ENCODE measurements at regions of chr7 and their contacts with region 1.

Region 1: GRCh38 chr7:120402079-120402767 is 129.2 kb downstream of the KCND2 start:
- DNase-seq: peak; percentile 50
- H3K4me3 ChIP-seq: peak overlapping the region in 2 of 3 experiments; percentile 10 to 30
- H3K27ac ChIP-seq: peak overlapping the region; percentile 53
- H3K4me1 ChIP-seq: peaks cover 10% of the 10 kb centered on the region
- H3K27me3 ChIP-seq: no peaks in the 10 kb centered on the region
- CTCF ChIP-seq: no peak
- POLR2A ChIP-seq: no peak

Region 2: GRCh38 chr7:120272261-120272660 is 130.0 kb before region 1 on chr7:
- CTCF ChIA-PET with region 1: no interaction called
- POLR2A ChIA-PET with region 1: no interaction called
- dilution Hi-C with region 1: no loop called
- intact Hi-C with region 1: loop called (anchors 5 kb)
- DNase-seq: peak; percentile 49
- H3K4me3 ChIP-seq: peak overlapping the region; percentile 33 to 82 (median 59)
- H3K27ac ChIP-seq: no peak overlapping the region
- H3K4me1 ChIP-seq: peaks cover 11% of the 10 kb centered on the region
- H3K27me3 ChIP-seq: peaks cover 14 to 19% of the 10 kb centered on the region in 2 experiments
- CTCF ChIP-seq: peak; percentile 66 to 71
- POLR2A ChIP-seq: no peak

Region 3: DNA sequence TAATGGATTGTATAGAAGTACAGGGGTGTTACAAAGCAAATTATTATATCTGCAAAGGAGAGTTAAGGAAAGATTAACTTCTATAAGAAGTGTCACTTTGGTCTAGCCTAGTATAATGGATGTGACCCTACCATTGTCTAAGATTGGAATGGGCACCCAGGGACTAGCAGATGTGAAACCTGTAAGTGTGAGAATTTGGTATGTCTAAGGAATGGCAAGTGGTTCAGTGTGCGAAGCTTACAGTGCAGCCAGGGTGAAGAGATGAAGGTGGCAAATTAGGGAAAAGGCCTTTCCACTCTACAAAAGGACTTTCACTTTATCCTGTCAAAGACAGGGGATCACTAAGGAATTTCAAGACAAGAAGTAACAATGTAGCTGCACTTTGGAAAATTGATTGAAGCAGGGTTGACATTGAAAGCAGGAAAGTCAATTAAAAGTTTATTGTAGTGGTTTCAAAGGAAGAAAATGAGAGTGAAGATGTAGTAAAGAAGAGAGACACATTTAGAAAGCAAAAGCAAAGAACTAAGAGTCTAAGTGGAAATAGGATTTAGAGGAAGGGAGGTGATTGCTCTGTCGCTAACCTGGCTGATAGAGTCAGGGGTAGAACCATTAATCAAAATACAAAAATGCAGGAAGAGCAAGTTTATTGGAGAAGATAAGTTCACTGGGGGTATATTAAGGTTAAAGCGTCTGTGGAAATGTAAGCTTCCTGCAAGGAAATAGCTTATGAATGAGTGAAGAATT is 81.8 kb before region 1 on chr7:
- CTCF ChIA-PET with region 1: no interaction called
- POLR2A ChIA-PET with region 1: no interaction called
- dilution Hi-C with region 1: no loop called
- intact Hi-C with region 1: loop called (anchors 5 kb)
- DNase-seq: peak; percentile 47
- H3K4me3 ChIP-seq: no peak overlapping the region
- H3K27ac ChIP-seq: no peak overlapping the region
- H3K4me1 ChIP-seq: peaks cover 11% of the 10 kb centered on the region
- H3K27me3 ChIP-seq: no peaks in the 10 kb centered on the region
- CTCF ChIP-seq: no peak
- POLR2A ChIP-seq: no peak

Region 4: DNA sequence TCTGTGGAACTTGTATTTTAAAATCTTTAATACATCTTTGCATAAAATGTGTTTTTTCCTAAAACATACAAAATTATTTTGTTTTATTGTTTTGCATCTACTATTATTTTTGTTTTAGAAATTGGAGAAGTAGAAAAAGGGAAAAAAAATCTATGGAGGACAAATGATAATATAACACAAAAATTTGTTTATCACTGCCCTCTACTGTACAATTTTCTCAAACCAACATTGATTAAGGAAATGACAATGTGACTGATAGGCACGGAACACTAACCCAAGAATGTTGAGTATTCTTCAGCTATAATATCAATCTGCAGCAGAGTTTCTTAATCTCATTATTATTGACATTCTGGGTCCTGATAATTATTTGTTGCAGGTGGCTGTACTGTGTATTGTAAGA is 538.8 kb after region 1 on chr7:
- CTCF ChIA-PET with region 1: no interaction called
- POLR2A ChIA-PET with region 1: no interaction called
- dilution Hi-C with region 1: no loop called
- intact Hi-C with region 1: loop called (anchors 10 kb)
- DNase-seq: peak; percentile 75
- H3K4me3 ChIP-seq: no peak overlapping the region
- H3K27ac ChIP-seq: peak overlapping the region; percentile 87
- H3K4me1 ChIP-seq: peaks cover 46% of the 10 kb centered on the region
- H3K27me3 ChIP-seq: no peaks in the 10 kb centered on the region
- CTCF ChIP-seq: peak in 1 of 2 donors; percentile 26
- POLR2A ChIP-seq: no peak

Measured in endothelial cell of umbilical vein (primary cell).